K562 (cell line): ENCODE measurements at regions of chr11 and their contacts with region 1.

Region 1: GRCh38 chr11:18395735-18396504 is 1.6 kb downstream of the LDHA start:
- DNase-seq: peak; percentile 91 to 98 (median 94)
- ATAC-seq: peak; percentile 89
- H3K4me3 ChIP-seq: peak overlapping the region; percentile 79
- H3K27ac ChIP-seq: peak overlapping the region; percentile 94
- H3K4me1 ChIP-seq: peaks cover 13 to 21% of the 10 kb centered on the region in 2 experiments
- H3K27me3 ChIP-seq: no peaks in the 10 kb centered on the region
- CTCF ChIP-seq: no peak
- EP300 ChIP-seq: peak; percentile 53
- POLR2A ChIP-seq: peak; percentile 74
- RAD21 ChIP-seq: 0 out of 4 replicates have a peak, but pooled peaks of 1 of the 2 experiments have one; percentile 5

Region 2: GRCh38 chr11:18321980-18322711 is 73.8 kb before region 1 on chr11 and contains the starts of genes GTF2H1 and HPS5:
- CTCF ChIA-PET with region 1: no interaction called
- POLR2A ChIA-PET with region 1: interaction called, 8 read pairs
- in situ Hi-C with region 1: no loop called
- intact Hi-C with region 1: loop called (anchors 1 kb)
- DNase-seq: peak; percentile 95 to 99 (median 96)
- ATAC-seq: peak; percentile 86
- H3K4me3 ChIP-seq: peak within 1 kb of the TSS; percentile 59
- H3K27ac ChIP-seq: peak within 1 kb of the TSS; percentile 96
- H3K4me1 ChIP-seq: peaks cover 0 to 23% of the 10 kb centered on the region in 2 experiments; a peak in 3 of 5 replicates
- H3K27me3 ChIP-seq: no peaks in the 10 kb centered on the region; a peak in 1 of 5 replicates
- CTCF ChIP-seq: no peak
- EP300 ChIP-seq: no peak; the same call in 1 of the 2 replicates
- POLR2A ChIP-seq: peak; percentile 97
- RAD21 ChIP-seq: no peak
- polyA plus RNA-seq, gene GTF2H1: 92.1 to 126 TPM
- polyA plus RNA-seq, gene HPS5: 12.2 to 14.2 TPM

Region 3: DNA sequence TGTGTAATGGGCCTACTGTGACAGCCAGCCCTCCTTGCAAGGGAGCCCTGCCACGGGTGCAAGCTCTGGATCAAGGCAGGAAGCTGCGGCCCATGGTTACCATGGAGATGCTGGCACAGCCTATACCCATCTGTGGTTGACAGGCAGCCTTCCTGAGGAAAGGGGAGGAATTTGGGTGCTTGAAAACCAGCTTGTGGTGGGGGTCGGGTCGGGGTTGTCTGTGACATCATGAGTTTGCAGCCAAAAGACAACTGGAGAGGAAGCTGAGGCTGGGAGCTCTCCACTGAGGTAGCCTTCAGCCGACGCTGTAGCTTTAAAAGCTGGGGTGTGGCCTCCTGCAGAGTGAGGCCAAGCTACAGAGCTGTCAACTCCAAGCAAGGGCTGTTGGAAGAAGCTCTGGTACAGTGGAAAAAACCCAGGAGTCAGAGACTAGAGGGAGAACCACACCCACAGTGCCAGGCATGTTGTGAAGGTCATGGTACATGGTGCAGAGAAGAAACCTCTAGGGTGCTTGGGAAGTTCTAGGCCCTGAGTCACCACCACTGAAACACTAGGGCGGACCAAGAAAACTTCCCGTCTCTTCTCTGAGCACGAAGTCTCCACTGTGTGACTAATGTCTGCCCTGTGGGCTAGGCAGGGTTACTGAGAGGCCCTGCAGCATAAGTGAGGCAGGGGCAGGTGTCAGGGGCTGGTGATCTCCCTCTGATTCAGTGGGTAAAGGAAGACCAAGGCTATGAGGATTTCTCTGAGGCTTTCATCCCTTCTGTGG is 12.3 kb before region 1 on chr11:
- CTCF ChIA-PET with region 1: no interaction called
- POLR2A ChIA-PET with region 1: interaction called, 45 read pairs
- in situ Hi-C with region 1: no loop called
- intact Hi-C with region 1: no loop called
- DNase-seq: peak; percentile 23 to 59 (median 42)
- ATAC-seq: peak; percentile 84
- H3K4me3 ChIP-seq: no peak overlapping the region
- H3K27ac ChIP-seq: peak overlapping the region; percentile 81
- H3K4me1 ChIP-seq: peaks cover 10 to 18% of the 10 kb centered on the region in 2 experiments; a peak in 4 of 5 replicates
- H3K27me3 ChIP-seq: no peaks in the 10 kb centered on the region
- CTCF ChIP-seq: no peak
- EP300 ChIP-seq: no peak
- POLR2A ChIP-seq: no peak
- RAD21 ChIP-seq: no peak

Region 4: GRCh38 chr11:18408558-18409242 is 12.8 kb after region 1 on chr11:
- CTCF ChIA-PET with region 1: no interaction called
- POLR2A ChIA-PET with region 1: interaction called, 16 read pairs
- in situ Hi-C with region 1: no loop called
- intact Hi-C with region 1: no loop called
- DNase-seq: peak in 1 of 4 experiments; percentile 31
- ATAC-seq: peak; percentile 46
- H3K4me3 ChIP-seq: no peak overlapping the region
- H3K27ac ChIP-seq: peak overlapping the region; percentile 11; the same call in 1 of the 3 replicates
- H3K4me1 ChIP-seq: peaks cover 0 to 4% of the 10 kb centered on the region in 2 experiments; a peak in 1 of 5 replicates
- H3K27me3 ChIP-seq: no peaks in the 10 kb centered on the region
- CTCF ChIP-seq: no peak
- EP300 ChIP-seq: no peak
- POLR2A ChIP-seq: peak; percentile 67; the same call in 1 of the 2 replicates
- RAD21 ChIP-seq: no peak

Region 5: GRCh38 chr11:18641677-18642076 is 245.8 kb after region 1 on chr11:
- CTCF ChIA-PET with region 1: no interaction called
- POLR2A ChIA-PET with region 1: no interaction called
- in situ Hi-C with region 1: no loop called
- intact Hi-C with region 1: loop called (anchors 10 kb)
- DNase-seq: no peak
- ATAC-seq: no peak
- H3K4me3 ChIP-seq: no peak overlapping the region
- H3K27ac ChIP-seq: no peak overlapping the region
- H3K4me1 ChIP-seq: no peaks in the 10 kb centered on the region; a peak in 1 of 5 replicates
- H3K27me3 ChIP-seq: no peaks in the 10 kb centered on the region
- CTCF ChIP-seq: no peak
- EP300 ChIP-seq: no peak
- POLR2A ChIP-seq: no peak
- RAD21 ChIP-seq: no peak

Region 6: DNA sequence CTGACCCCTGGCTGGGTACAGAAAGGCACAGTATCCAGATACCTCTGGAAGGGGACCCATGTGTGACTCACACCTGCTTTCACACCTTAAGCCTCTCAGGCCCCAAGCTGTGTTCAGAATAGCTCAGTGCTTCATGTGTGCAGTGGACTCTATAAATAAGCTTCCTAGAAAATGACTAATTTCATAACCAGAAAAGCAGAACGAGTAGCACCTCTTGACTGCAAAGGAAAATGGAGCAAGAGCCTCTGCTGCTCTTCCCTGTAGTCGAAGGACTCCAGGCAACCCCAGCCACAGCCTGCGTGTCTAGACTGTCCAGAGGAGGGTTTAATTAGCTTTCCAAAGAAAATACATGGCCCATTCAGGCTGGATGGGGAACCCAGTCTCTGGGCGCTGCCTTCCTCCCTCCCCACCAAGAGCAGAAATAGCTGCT is 372.6 kb after region 1 on chr11:
- CTCF ChIA-PET with region 1: no interaction called
- POLR2A ChIA-PET with region 1: no interaction called
- in situ Hi-C with region 1: no loop called
- intact Hi-C with region 1: no loop called
- DNase-seq: no peak
- ATAC-seq: no peak
- H3K4me3 ChIP-seq: no peak overlapping the region
- H3K27ac ChIP-seq: no peak overlapping the region
- H3K4me1 ChIP-seq: no peaks in the 10 kb centered on the region
- H3K27me3 ChIP-seq: peaks cover 2 to 39% of the 10 kb centered on the region in 2 experiments; a peak in 4 of 5 replicates
- CTCF ChIP-seq: no peak
- EP300 ChIP-seq: no peak
- POLR2A ChIP-seq: no peak
- RAD21 ChIP-seq: no peak